Caco-2 (cell line): ENCODE measurements at regions of chr12 and their contacts with region 1.

Region 1: DNA sequence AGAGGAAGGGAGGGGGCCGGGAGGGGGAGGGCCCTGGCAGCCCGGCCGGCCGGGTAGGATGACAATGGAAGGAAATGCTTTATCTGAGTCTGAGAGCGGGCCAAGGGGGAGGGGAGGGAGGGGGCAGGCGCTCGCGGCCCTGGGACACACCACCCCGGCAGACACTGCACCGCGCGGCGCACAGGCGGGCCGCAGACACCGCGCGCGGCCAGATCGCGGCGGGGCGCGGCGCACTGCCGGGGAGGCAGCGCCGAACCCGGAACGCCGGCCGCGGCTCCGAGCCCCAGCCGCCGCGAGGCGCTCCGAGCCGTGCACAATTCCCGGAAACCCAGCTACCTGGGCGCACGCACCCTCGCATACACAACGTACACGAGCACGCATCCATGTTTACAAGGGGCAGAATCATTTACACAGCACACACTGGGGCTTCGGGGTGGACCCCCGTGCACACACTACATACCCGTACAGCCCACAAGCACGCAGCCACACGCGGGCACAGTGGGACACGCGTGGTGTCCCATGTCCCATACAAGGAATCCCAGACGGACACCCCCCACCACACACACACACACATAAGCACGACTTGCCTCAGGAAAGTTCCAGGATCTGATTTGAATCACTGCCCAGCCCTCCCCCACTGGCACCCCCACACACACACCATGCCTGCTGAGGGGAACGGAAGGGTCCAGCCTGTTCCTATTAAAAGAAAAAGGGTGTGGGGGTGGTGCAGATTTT is at the start of gene HDAC7:
- DNase-seq: peak; percentile 82 to 90
- H3K4me3 ChIP-seq: peak within 1 kb of the TSS; percentile 92
- H3K4me3 Mint-ChIP-seq: peak within 1 kb of the TSS; percentile 97
- H3K27ac Mint-ChIP-seq: peak within 1 kb of the TSS; percentile 99
- H3K4me1 ChIP-seq: peaks cover 56% of the 10 kb centered on the region
- H3K4me1 Mint-ChIP-seq: peaks cover 59% of the 10 kb centered on the region
- H3K27me3 ChIP-seq: no peaks in the 10 kb centered on the region
- H3K27me3 Mint-ChIP-seq: no peaks in the 10 kb centered on the region
- CTCF ChIP-seq: no peak
- total RNA-seq, gene HDAC7: 71.2 and 71.9 TPM in 2 replicates

Region 2: GRCh38 chr12:47797441-47797840 is 22.6 kb before region 1 on chr12:
- CTCF ChIA-PET with region 1: interaction called, 10 read pairs
- POLR2A ChIA-PET with region 1: no interaction called
- intact Hi-C with region 1: loop called (anchors 1 kb)
- DNase-seq: peak in 1 of 2 experiments; percentile 66
- H3K4me3 ChIP-seq: no peak overlapping the region
- H3K4me3 Mint-ChIP-seq: no peak overlapping the region
- H3K27ac Mint-ChIP-seq: no peak overlapping the region
- H3K4me1 ChIP-seq: no peaks in the 10 kb centered on the region
- H3K4me1 Mint-ChIP-seq: no peaks in the 10 kb centered on the region
- H3K27me3 ChIP-seq: no peaks in the 10 kb centered on the region
- H3K27me3 Mint-ChIP-seq: no peaks in the 10 kb centered on the region
- CTCF ChIP-seq: peak; percentile 31 to 68

Region 3: GRCh38 chr12:47967461-47968321 is 147.6 kb after region 1 on chr12:
- CTCF ChIA-PET with region 1: no interaction called
- POLR2A ChIA-PET with region 1: no interaction called
- intact Hi-C with region 1: no loop called
- DNase-seq: no peak
- H3K4me3 ChIP-seq: no peak overlapping the region
- H3K4me3 Mint-ChIP-seq: no peak overlapping the region
- H3K27ac Mint-ChIP-seq: no peak overlapping the region
- H3K4me1 ChIP-seq: no peaks in the 10 kb centered on the region
- H3K4me1 Mint-ChIP-seq: peaks cover 15% of the 10 kb centered on the region
- H3K27me3 ChIP-seq: no peaks in the 10 kb centered on the region
- H3K27me3 Mint-ChIP-seq: no peaks in the 10 kb centered on the region
- CTCF ChIP-seq: no peak